Activated CD4-positive, alpha-beta T cell treated with anti-CD3 and anti-CD28 coated beads for 36 hours (primary cell): ENCODE measurements at regions of chr4 and their contacts with region 1.

Region 1: DNA sequence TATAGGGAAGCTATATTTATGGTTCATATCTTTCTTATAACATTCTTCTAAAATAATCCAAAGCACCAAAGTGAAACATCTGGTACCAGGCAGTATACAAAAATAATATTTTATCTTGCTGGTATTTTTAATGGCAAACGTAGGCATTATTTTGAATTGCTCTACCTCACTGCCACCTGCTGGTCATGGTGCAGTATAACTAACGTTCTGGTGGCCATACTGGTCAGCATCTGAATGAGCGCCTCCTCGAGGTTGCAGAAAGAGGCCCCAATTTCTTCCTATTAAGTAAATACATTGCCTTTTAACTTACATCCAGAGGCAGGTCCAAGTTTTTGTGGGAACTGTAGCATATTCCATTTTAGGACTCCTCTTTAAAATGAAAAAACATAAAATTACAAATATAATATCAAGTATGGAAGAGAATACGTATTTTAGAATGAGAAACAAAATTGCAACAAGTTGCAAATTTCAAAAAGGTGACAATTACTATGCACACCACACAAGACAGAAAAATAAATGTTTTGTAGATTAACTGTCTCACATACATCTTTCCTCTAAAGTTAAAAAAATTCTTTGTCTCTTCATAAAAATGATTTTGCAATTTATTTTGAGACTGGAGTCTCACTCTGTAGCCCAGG is 22.9 kb upstream of the CWH43 start:
- DNase-seq: peak; percentile 86
- ATAC-seq: peak; percentile 89
- H3K4me3 Mint-ChIP-seq: no peak overlapping the region
- H3K27ac Mint-ChIP-seq: no peak overlapping the region
- H3K4me1 Mint-ChIP-seq: no peaks in the 10 kb centered on the region
- H3K27me3 Mint-ChIP-seq: no peaks in the 10 kb centered on the region

Region 2: DNA sequence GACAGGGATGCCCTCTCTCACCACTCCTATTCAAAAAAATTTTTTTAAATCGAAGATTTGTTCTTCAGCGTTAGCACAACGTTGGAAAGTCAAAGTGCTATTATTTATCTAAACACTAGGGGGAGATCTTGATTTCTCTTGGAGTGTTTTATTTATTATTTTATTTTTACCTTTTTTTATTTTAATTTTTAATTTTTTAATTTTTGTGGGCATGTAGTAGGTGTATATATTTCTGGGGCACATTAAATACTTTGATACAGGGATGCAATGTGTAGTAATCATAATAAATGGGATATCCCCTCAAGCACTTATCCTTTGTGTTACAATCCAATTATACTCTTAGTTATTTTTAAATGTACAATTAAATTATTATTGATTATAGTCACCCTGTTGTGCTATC is 517.5 kb before region 1 on chr4:
- CTCF ChIA-PET with region 1: interaction called, 4 read pairs
- POLR2A ChIA-PET with region 1: no interaction called
- intact Hi-C with region 1: loop called in 1 of 2 experiments (anchors 1 kb)
- DNase-seq: no peak
- ATAC-seq: no peak
- H3K4me3 Mint-ChIP-seq: no peak overlapping the region
- H3K27ac Mint-ChIP-seq: no peak overlapping the region
- H3K4me1 Mint-ChIP-seq: no peaks in the 10 kb centered on the region
- H3K27me3 Mint-ChIP-seq: no peaks in the 10 kb centered on the region

Region 3: DNA sequence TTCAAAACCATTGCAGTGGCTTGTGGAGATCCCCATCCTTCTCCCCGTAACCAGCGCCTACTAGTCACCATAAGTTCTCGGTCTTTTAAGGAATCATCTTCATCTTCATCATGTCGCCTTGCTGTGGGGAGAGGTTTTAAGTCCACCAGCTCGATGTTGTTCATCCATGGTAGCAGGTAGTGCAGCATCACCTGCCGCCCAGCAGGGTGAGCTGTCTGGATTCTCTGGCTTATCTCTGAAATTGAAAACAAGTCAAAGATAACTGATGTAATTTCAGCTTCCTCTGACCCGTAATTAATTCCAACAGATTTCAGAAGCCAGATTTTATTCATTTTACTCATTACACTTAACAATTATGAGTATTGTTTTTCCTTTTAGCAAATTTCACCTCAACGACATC is 405.7 kb before region 1 on chr4:
- CTCF ChIA-PET with region 1: no interaction called
- POLR2A ChIA-PET with region 1: no interaction called
- intact Hi-C with region 1: no loop called
- DNase-seq: peak; percentile 46
- ATAC-seq: peak; percentile 44
- H3K4me3 Mint-ChIP-seq: no peak overlapping the region
- H3K27ac Mint-ChIP-seq: no peak overlapping the region
- H3K4me1 Mint-ChIP-seq: peaks cover 10% of the 10 kb centered on the region
- H3K27me3 Mint-ChIP-seq: no peaks in the 10 kb centered on the region

Region 4: GRCh38 chr4:48681856-48682255 is 281.3 kb before region 1 on chr4:
- CTCF ChIA-PET with region 1: no interaction called
- POLR2A ChIA-PET with region 1: no interaction called
- intact Hi-C with region 1: loop called in 1 of 2 experiments (anchors 5 kb)
- DNase-seq: peak; percentile 23
- ATAC-seq: peak; percentile 98
- H3K4me3 Mint-ChIP-seq: no peak overlapping the region
- H3K27ac Mint-ChIP-seq: no peak overlapping the region
- H3K4me1 Mint-ChIP-seq: peaks cover 42% of the 10 kb centered on the region
- H3K27me3 Mint-ChIP-seq: no peaks in the 10 kb centered on the region

Region 5: DNA sequence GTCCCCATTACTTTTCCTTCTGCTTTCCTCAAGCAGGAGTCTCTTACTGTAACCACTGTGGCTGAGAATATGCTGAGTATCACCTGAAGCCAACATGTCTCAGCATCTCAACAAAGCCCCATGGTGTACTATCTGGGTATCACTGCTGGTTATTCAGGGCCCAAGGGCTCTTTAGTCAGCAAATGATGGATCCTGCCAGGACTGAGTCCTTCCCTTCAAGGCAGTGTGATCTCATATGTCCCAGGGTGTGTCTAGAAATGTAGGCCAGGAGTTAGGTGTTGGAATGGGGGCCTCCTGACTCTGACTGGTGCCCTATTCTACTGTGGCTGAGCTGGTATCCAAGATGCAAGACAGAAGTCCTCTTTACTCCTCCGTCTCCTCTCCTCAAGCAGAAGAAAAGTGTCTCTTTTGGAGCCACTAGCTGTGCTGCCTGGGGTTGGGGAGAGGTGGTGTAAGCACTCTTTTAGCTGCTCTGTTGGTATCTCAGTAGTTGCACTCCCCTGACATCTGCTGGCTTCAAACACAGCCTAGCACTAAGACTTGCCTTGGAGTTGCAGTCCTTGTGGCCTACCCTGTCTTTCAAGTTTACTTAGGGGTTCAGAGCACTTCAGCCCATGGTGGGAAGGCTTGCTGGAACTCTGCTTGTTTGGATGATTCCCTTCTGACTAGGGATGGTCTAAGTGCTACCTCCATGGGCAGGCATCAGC is 85.2 kb before region 1 on chr4:
- CTCF ChIA-PET with region 1: no interaction called
- POLR2A ChIA-PET with region 1: no interaction called
- intact Hi-C with region 1: loop called in 1 of 2 experiments (anchors 2 kb)
- DNase-seq: no peak
- ATAC-seq: no peak
- H3K4me3 Mint-ChIP-seq: no peak overlapping the region
- H3K27ac Mint-ChIP-seq: no peak overlapping the region
- H3K4me1 Mint-ChIP-seq: no peaks in the 10 kb centered on the region
- H3K27me3 Mint-ChIP-seq: no peaks in the 10 kb centered on the region